ENCODE measurements at regions of chr16 and their contacts with region 1.

Region 1: DNA sequence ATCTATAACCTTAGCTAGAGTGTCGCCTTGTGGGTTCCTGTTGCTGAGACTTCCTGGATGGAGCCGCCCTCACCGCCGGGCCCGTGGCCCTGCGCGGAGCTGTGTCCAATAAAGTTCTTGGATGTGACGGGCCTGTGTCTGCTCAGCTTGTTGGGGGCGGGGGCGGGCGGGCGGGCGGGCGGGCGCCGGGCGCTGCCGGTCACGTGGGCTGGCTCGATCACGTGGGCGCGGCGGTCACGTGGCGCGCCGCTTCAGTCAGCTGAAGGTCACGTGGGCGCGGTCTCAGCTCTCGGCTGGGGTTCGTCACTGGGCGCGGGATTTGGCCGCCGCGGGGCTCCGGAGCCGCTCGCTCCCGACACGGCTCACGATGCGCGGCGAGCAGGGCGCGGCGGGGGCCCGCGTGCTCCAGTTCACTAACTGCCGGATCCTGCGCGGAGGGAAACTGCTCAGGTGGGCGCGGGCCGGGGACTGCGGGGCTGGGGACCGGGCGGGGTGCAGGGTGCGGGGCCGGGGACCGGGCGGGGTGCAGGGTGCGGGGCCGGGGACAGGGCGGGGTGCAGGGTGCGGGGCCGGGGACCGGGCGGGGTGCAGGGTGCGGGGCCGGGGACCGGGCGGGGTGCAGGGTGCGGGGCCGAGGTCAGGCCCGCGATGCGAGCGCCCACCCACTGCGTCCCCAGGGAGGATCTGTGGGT is at the start of gene AMDHD2:
- DNase-seq: peak; percentile 68
- ATAC-seq: peak; percentile 29
- H3K4me3 ChIP-seq: peak within 1 kb of the TSS; percentile 77 to 85 (median 84)
- H3K27ac ChIP-seq: peak within 1 kb of the TSS; percentile 84
- H3K4me1 ChIP-seq: peaks cover 89% of the 10 kb centered on the region
- H3K27me3 ChIP-seq: no peaks in the 10 kb centered on the region
- CTCF ChIP-seq: no peak
- EP300 ChIP-seq: no peak
- POLR2A ChIP-seq: peak; percentile 37 to 73; a peak in 2 of 4 replicates
- RAD21 ChIP-seq: no peak
- total RNA-seq, gene AMDHD2: 13.8 and 39.1 TPM in 2 replicates

Region 2: GRCh38 chr16:2531767-2532493 is 11.7 kb after region 1 on chr16:
- CTCF ChIA-PET with region 1: no interaction called
- POLR2A ChIA-PET with region 1: interaction called, 17 read pairs
- in situ Hi-C with region 1: no loop called
- intact Hi-C with region 1: no loop called
- DNase-seq: peak; percentile 92
- ATAC-seq: peak; percentile 76
- H3K4me3 ChIP-seq: peak overlapping the region; percentile 47 to 77 (median 69); a peak in 5 of 6 replicates
- H3K27ac ChIP-seq: peak overlapping the region; percentile 75
- H3K4me1 ChIP-seq: peaks cover 59% of the 10 kb centered on the region
- H3K27me3 ChIP-seq: no peaks in the 10 kb centered on the region
- CTCF ChIP-seq: peak; percentile 17; the same call in 1 of the 2 replicates
- EP300 ChIP-seq: no peak
- POLR2A ChIP-seq: peak; percentile 43 to 90; a peak in 3 of 4 replicates
- RAD21 ChIP-seq: peak; percentile 48; the same call in 1 of the 2 replicates

Region 3: DNA sequence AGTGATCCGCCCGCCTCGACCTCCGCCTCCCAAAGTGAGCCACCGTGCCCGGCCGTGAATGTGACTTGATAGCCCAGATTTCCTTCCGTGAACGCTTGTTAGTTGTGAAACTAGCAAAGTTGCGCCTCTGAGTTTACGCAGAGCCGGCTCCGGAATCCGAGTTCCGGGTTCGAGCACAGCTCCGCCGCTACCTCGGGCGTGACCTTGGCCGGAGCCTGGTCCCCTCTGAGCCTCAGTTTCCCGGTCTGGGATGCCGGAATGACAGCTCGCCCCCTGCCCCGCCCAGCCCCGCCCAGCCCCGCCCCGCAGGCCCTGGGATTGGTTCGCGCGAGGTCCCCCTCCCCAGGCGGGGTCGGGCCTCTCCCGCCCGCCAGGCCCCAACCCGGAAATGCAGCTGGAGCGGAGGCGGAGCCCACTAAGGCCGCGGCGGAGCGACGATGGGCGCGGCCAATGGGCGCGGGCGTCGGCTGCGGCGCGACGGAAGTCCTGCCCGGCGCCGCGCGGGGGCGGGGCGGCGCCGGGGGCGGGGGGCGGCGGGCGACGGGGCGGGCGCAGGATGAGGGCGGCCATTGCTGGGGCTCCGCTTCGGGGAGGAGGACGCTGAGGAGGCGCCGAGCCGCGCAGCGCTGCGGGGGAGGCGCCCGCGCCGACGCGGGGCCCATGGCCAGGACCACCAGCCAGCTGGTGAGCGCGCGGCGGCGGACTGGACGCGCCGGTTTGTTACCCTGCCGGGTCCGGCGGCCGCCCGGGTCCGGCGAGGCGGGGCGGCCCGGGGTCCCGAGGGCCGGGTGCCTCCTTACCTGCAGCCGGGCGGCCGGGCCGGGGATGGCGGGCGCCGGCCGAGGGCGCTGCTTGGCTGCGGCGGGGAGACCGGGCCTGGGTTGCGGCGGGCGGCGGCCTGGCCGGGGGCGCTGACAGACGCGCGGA is 17.5 kb after region 1 on chr16 and contains the start of gene PDPK1:
- CTCF ChIA-PET with region 1: no interaction called
- POLR2A ChIA-PET with region 1: interaction called, 17 read pairs
- in situ Hi-C with region 1: no loop called
- intact Hi-C with region 1: no loop called
- DNase-seq: peak; percentile 85
- ATAC-seq: peak; percentile 63
- H3K4me3 ChIP-seq: peak within 1 kb of the TSS; percentile 62 to 79 (median 74)
- H3K27ac ChIP-seq: peak within 1 kb of the TSS; percentile 68
- H3K4me1 ChIP-seq: peaks cover 82% of the 10 kb centered on the region
- H3K27me3 ChIP-seq: no peaks in the 10 kb centered on the region
- CTCF ChIP-seq: no peak
- EP300 ChIP-seq: no peak
- POLR2A ChIP-seq: peak; percentile 34 to 73; a peak in 3 of 4 replicates
- RAD21 ChIP-seq: peak; percentile 44; the same call in 1 of the 2 replicates
- total RNA-seq, gene PDPK1: 59.6 and 72.9 TPM in 2 replicates

Region 4: GRCh38 chr16:3045357-3045728 is 525.1 kb after region 1 on chr16:
- CTCF ChIA-PET with region 1: no interaction called
- POLR2A ChIA-PET with region 1: no interaction called
- in situ Hi-C with region 1: no loop called
- intact Hi-C with region 1: no loop called
- DNase-seq: peak; percentile 37
- ATAC-seq: peak; percentile 81
- H3K4me3 ChIP-seq: peak overlapping the region; percentile 19 to 67 (median 48); a peak in 5 of 6 replicates
- H3K27ac ChIP-seq: no peak overlapping the region
- H3K4me1 ChIP-seq: peaks cover 25% of the 10 kb centered on the region
- H3K27me3 ChIP-seq: peaks cover 11 to 74% of the 10 kb centered on the region in 2 experiments
- CTCF ChIP-seq: no peak
- EP300 ChIP-seq: no peak
- POLR2A ChIP-seq: no peak
- RAD21 ChIP-seq: no peak

Measured in HepG2 (cell line).